Common myeloid progenitor, CD34-positive (primary cell): ENCODE measurements at regions of chr10 and their contacts with region 1.

Region 1: GRCh38 chr10:58152673-58153263 is 114.9 kb downstream of the IPMK start:
- DNase-seq: peak; percentile 38 to 73 (median 63)
- H3K4me3 ChIP-seq: no peak overlapping the region
- H3K27ac ChIP-seq: no peak overlapping the region
- H3K4me1 ChIP-seq: peaks cover 0 to 13% (median 6%) of the 10 kb centered on the region in 4 experiments
- H3K27me3 ChIP-seq: no peaks in the 10 kb centered on the region

Region 2: DNA sequence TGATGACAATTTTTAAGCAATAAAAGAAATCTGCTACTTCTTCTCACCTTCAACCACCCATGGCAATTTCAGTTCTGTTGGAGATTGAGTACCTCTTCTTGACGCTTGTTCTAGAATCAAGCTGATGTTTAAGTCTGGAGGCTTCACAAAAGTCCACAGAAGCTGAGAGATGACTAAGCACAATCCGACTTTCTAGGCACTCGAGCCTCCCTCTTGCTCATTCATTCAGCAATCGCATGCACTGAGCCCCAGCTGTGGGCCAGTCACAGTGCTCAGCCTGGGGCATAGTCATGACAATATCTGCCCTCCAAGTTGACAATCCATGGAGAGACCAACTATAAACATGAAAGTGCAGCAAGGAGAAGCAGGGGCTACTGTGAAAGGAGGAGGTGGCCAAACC is 11.7 kb after region 1 on chr10:
- CTCF ChIA-PET with region 1: interaction called, 11 read pairs
- POLR2A ChIA-PET with region 1: no interaction called
- DNase-seq: no peak
- H3K4me3 ChIP-seq: no peak overlapping the region
- H3K27ac ChIP-seq: no peak overlapping the region
- H3K4me1 ChIP-seq: no peaks in the 10 kb centered on the region
- H3K27me3 ChIP-seq: peaks cover 0 to 2% (median 0%) of the 10 kb centered on the region in 5 experiments

Region 3: DNA sequence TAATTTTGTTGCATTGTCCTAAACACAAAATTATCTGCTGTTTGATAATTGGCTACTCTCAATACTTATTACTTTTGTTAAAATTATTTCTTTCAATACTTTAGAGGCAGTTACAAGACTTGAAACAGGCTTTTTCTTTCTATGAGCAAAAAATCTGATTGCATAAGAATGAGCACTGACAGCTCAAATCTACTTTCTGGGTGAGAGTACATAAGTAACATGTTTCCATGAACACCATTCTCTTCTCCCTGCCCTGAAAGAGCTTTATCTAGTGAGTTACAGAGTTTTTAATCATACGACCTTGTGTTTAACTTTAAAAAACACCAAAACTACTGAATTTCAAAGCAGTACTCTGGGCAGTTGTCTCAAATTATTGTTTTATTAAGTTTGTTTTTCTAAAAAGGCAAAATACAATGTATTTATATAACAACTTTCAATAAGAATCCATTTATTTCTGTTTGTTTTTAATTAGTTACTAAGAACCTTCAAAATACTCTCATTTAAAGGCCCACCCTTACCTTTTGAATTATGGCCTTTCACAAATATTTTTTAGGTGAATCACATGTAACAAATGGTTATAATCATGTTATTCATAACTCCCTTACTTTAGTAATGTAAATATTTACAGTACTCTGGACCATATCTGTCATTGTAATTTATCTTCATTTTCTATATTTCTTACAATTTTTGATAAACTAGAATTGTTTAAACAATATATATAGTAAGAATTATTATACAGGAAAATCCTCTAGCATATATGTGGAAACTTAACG is 209.4 kb after region 1 on chr10:
- CTCF ChIA-PET with region 1: no interaction called
- POLR2A ChIA-PET with region 1: no interaction called
- DNase-seq: no peak
- H3K4me3 ChIP-seq: no peak overlapping the region
- H3K27ac ChIP-seq: no peak overlapping the region
- H3K4me1 ChIP-seq: peaks cover 0 to 4% (median 2%) of the 10 kb centered on the region in 4 experiments
- H3K27me3 ChIP-seq: no peaks in the 10 kb centered on the region

Region 4: DNA sequence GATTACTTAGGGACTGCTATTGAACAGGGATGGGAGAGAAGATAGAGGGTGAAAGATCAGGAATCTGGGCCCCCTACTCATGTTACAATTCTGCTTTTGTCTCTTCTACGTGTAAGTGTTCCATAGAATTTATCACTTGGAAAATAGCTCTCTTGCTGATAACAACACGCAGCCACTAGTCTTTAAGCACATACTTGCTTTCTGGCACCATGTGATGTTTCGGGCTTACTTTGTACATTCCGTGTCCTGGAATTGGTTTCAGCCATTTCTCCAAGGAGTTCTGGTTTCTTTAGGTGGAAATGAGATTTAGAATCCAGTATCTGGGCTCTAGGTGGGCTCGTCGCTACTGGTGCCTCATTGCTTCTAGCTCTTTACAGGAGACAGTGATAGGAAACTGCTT is 292.1 kb after region 1 on chr10:
- CTCF ChIA-PET with region 1: no interaction called
- POLR2A ChIA-PET with region 1: no interaction called
- DNase-seq: no peak
- H3K4me3 ChIP-seq: no peak overlapping the region
- H3K27ac ChIP-seq: no peak overlapping the region
- H3K4me1 ChIP-seq: no peaks in the 10 kb centered on the region
- H3K27me3 ChIP-seq: no peaks in the 10 kb centered on the region